HepG2 (cell line): ENCODE measurements at regions of chr15 and their contacts with region 1.

Region 1: DNA sequence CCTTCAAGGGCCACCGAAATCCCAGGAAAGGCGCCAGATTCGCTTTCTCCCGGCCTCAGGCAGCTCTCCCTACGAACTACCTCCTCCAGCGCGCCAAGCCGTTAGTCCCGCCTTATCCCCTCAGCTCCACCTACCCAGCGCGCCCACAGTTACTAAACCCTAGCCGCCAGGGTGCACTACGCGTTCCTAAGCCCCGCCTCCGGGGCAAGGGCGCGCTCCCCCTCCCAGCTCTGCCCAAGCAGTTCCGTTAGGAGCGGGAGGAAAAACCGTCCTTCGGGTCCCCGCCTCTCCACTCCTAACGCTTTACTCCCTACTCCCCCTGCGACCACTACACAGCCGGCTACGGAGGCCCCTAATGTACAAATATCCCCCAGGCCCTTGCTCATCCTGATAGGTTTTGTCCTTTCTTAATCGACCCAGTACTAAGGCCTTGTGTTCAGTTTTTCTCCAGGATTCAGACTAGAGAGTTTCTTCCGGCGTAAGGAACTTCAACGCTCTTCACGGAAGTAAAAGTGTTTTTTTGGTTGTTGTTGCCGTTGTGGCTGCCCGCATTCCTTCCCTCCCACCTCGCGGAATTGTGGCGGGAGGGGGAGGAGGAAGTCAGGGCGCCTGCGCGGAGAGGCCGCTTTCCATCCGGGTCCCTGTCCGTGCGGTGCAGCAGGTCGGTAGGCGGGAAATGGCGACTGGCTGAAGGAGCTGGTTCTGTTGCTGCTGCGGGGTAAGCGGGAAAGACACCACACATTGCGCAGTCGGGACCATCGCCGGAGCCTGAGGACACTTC is at the start of gene CTDSPL2:
- DNase-seq: peak; percentile 96
- ATAC-seq: peak; percentile 97
- H3K4me3 ChIP-seq: peak within 1 kb of the TSS; percentile 81 to 93 (median 91)
- H3K27ac ChIP-seq: peak within 1 kb of the TSS; percentile 99
- H3K4me1 ChIP-seq: peaks cover 30% of the 10 kb centered on the region
- H3K27me3 ChIP-seq: no peaks in the 10 kb centered on the region; a peak in 2 of 5 replicates
- CTCF ChIP-seq: peak; percentile 72
- EP300 ChIP-seq: 0 out of 4 replicates have a peak, but pooled peaks of 1 of the 2 experiments have one; percentile 24
- POLR2A ChIP-seq: peak; percentile 90 to 94
- RAD21 ChIP-seq: no peak
- total RNA-seq, gene CTDSPL2: 56.2 and 95.2 TPM in 2 replicates

Region 2: GRCh38 chr15:44286814-44287452 is 140.2 kb before region 1 on chr15:
- CTCF ChIA-PET with region 1: no interaction called
- POLR2A ChIA-PET with region 1: interaction called, 18 read pairs
- in situ Hi-C with region 1: no loop called
- intact Hi-C with region 1: no loop called
- DNase-seq: no peak
- ATAC-seq: no peak
- H3K4me3 ChIP-seq: peak overlapping the region in 1 of 3 experiments; percentile 94; a peak in 1 of 6 replicates
- H3K27ac ChIP-seq: no peak overlapping the region
- H3K4me1 ChIP-seq: peaks cover 28% of the 10 kb centered on the region
- H3K27me3 ChIP-seq: no peaks in the 10 kb centered on the region; a peak in 1 of 5 replicates
- CTCF ChIP-seq: no peak
- EP300 ChIP-seq: no peak
- POLR2A ChIP-seq: no peak
- RAD21 ChIP-seq: no peak

Region 3: GRCh38 chr15:44394062-44394461 is 33.1 kb before region 1 on chr15:
- CTCF ChIA-PET with region 1: no interaction called
- POLR2A ChIA-PET with region 1: interaction called, 9 read pairs
- in situ Hi-C with region 1: no loop called
- intact Hi-C with region 1: loop called (anchors 5 kb)
- DNase-seq: peak; percentile 43
- ATAC-seq: no peak; the same call in 1 of the 3 replicates
- H3K4me3 ChIP-seq: no peak overlapping the region
- H3K27ac ChIP-seq: no peak overlapping the region
- H3K4me1 ChIP-seq: peaks cover 13% of the 10 kb centered on the region
- H3K27me3 ChIP-seq: no peaks in the 10 kb centered on the region
- CTCF ChIP-seq: no peak
- EP300 ChIP-seq: no peak
- POLR2A ChIP-seq: no peak
- RAD21 ChIP-seq: no peak

Region 4: GRCh38 chr15:44536962-44537734 is 110.0 kb after region 1 on chr15 and contains the start of gene EIF3J:
- CTCF ChIA-PET with region 1: no interaction called
- POLR2A ChIA-PET with region 1: interaction called, 20 read pairs
- in situ Hi-C with region 1: no loop called
- intact Hi-C with region 1: no loop called
- DNase-seq: peak; percentile 91
- ATAC-seq: peak; percentile 95
- H3K4me3 ChIP-seq: peak within 1 kb of the TSS; percentile 84 to 91 (median 89)
- H3K27ac ChIP-seq: peak within 1 kb of the TSS; percentile 98
- H3K4me1 ChIP-seq: peaks cover 44% of the 10 kb centered on the region
- H3K27me3 ChIP-seq: no peaks in the 10 kb centered on the region; a peak in 1 of 5 replicates
- CTCF ChIP-seq: no peak
- EP300 ChIP-seq: no peak
- POLR2A ChIP-seq: peak; percentile 29 to 85; a peak in 3 of 4 replicates
- RAD21 ChIP-seq: no peak; the same call in 1 of the 2 replicates
- total RNA-seq, gene EIF3J: 69.2 and 105 TPM in 2 replicates